ENCODE measurements at regions of chr5 and their contacts with region 1.

Region 1: GRCh38 chr5:141992349-141992963 is 20.4 kb downstream of the GNPDA1 start:
- DNase-seq: no peak
- H3K4me3 ChIP-seq: no peak overlapping the region
- H3K27ac ChIP-seq: no peak overlapping the region
- H3K4me1 ChIP-seq: peaks cover 0 to 8% (median 0%) of the 10 kb centered on the region in 3 donors
- H3K27me3 ChIP-seq: no peaks in the 10 kb centered on the region
- CTCF ChIP-seq: peak; percentile 58 to 84 (median 77)
- POLR2A ChIP-seq: no peak

Region 2: GRCh38 chr5:142053426-142054151 is 61.1 kb after region 1 on chr5:
- intact Hi-C with region 1: no loop called
- DNase-seq: no peak
- H3K4me3 ChIP-seq: no peak overlapping the region
- H3K27ac ChIP-seq: peak overlapping the region in 1 of 4 donors; percentile 61
- H3K4me1 ChIP-seq: peaks cover 0 to 22% (median 6%) of the 10 kb centered on the region in 3 donors
- H3K27me3 ChIP-seq: no peaks in the 10 kb centered on the region
- CTCF ChIP-seq: no peak
- POLR2A ChIP-seq: no peak

Region 3: GRCh38 chr5:142145106-142145900 is 152.8 kb after region 1 on chr5:
- intact Hi-C with region 1: loop called (anchors 5 kb)
- DNase-seq: no peak
- H3K4me3 ChIP-seq: no peak overlapping the region
- H3K27ac ChIP-seq: no peak overlapping the region
- H3K4me1 ChIP-seq: no peaks in the 10 kb centered on the region
- H3K27me3 ChIP-seq: no peaks in the 10 kb centered on the region
- CTCF ChIP-seq: peak; percentile 44 to 69 (median 58)
- POLR2A ChIP-seq: no peak

Measured in esophagus squamous epithelium (tissue), 5 donors.